ENCODE measurements at regions of chr12 and their contacts with region 1.

Region 1: GRCh38 chr12:93569656-93570551 is 2.6 kb upstream of the SOCS2 start:
- DNase-seq: peak; percentile 83
- ATAC-seq: peak; percentile 51
- H3K4me3 ChIP-seq: peak overlapping the region; percentile 63 to 89 (median 67)
- H3K4me3 Mint-ChIP-seq: peak overlapping the region; percentile 88
- H3K27ac ChIP-seq: no peak overlapping the region
- H3K27ac Mint-ChIP-seq: peak overlapping the region; percentile 47
- H3K4me1 ChIP-seq: peaks cover 26 to 33% of the 10 kb centered on the region in 2 donors
- H3K4me1 Mint-ChIP-seq: peaks cover 21% of the 10 kb centered on the region
- H3K27me3 ChIP-seq: peaks cover 0 to 43% (median 30%) of the 10 kb centered on the region in 4 experiments
- H3K27me3 Mint-ChIP-seq: peaks cover 44% of the 10 kb centered on the region
- CTCF ChIP-seq: peak; percentile 71

Region 2: DNA sequence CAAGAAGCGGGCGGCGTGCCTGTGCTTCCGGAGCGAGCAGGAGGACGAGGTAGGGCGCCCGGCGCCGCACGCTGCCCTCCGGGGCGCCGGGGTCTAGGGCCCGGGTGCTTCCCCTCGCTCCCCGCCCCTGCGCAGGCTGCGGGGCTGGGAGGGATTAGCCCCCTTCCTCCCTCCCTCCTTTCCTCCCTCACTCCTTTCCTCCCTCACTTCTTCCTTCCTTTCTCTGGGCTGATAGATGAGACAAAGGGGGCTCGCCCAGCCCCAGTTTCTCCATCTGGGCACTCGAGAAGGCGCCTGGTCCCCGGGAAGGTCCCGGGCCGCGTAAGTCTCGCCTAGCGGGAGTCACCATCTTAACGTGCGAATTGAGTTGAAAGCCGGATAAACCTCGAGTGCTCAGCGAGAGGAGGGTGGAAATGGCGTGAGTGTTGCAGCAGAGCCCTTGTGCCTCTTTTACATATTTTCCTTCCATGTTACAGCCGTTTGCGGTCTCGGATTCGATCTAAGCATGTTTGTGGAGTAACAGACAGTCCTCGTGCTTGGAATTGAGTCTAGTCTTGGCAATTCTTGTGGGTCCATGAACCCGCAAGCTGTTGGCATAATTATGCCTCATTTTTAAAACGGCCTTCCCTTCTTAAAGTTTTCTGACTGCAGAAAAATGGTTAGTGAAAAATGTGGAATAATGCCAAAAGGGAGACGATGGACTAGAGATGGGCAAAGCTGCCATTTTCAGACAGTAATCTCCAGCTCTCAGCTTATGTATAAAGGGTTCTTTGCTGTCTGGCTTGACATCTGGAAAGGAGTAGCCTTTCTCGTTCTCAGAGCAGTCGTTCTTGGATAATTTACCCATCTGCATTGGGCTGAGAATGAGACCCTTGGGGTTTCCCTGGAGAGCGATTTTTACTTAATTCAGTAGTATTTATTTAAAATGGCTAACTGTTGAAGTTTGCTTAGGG is 191.3 kb before region 1 on chr12:
- CTCF ChIA-PET with region 1: no interaction called
- POLR2A ChIA-PET with region 1: no interaction called
- intact Hi-C with region 1: loop called (anchors 5 kb)
- DNase-seq: peak; percentile 76
- ATAC-seq: peak; percentile 44
- H3K4me3 ChIP-seq: peak overlapping the region; percentile 73 to 96 (median 86)
- H3K4me3 Mint-ChIP-seq: peak overlapping the region; percentile 98
- H3K27ac ChIP-seq: peak overlapping the region; percentile 75 to 89
- H3K27ac Mint-ChIP-seq: peak overlapping the region; percentile 98
- H3K4me1 ChIP-seq: peaks cover 20 to 29% of the 10 kb centered on the region in 2 donors
- H3K4me1 Mint-ChIP-seq: peaks cover 40% of the 10 kb centered on the region
- H3K27me3 ChIP-seq: no peaks in the 10 kb centered on the region
- H3K27me3 Mint-ChIP-seq: no peaks in the 10 kb centered on the region
- CTCF ChIP-seq: no peak

Region 3: GRCh38 chr12:93502802-93503623 is 66.9 kb before region 1 on chr12:
- CTCF ChIA-PET with region 1: interaction called, 20 read pairs
- POLR2A ChIA-PET with region 1: no interaction called
- intact Hi-C with region 1: loop called (anchors 2 kb)
- DNase-seq: peak; percentile 67
- ATAC-seq: no peak
- H3K4me3 ChIP-seq: no peak overlapping the region
- H3K4me3 Mint-ChIP-seq: no peak overlapping the region
- H3K27ac ChIP-seq: no peak overlapping the region
- H3K27ac Mint-ChIP-seq: no peak overlapping the region
- H3K4me1 ChIP-seq: no peaks in the 10 kb centered on the region
- H3K4me1 Mint-ChIP-seq: peaks cover 5% of the 10 kb centered on the region
- H3K27me3 ChIP-seq: no peaks in the 10 kb centered on the region
- H3K27me3 Mint-ChIP-seq: no peaks in the 10 kb centered on the region
- CTCF ChIP-seq: peak; percentile 92

Region 4: DNA sequence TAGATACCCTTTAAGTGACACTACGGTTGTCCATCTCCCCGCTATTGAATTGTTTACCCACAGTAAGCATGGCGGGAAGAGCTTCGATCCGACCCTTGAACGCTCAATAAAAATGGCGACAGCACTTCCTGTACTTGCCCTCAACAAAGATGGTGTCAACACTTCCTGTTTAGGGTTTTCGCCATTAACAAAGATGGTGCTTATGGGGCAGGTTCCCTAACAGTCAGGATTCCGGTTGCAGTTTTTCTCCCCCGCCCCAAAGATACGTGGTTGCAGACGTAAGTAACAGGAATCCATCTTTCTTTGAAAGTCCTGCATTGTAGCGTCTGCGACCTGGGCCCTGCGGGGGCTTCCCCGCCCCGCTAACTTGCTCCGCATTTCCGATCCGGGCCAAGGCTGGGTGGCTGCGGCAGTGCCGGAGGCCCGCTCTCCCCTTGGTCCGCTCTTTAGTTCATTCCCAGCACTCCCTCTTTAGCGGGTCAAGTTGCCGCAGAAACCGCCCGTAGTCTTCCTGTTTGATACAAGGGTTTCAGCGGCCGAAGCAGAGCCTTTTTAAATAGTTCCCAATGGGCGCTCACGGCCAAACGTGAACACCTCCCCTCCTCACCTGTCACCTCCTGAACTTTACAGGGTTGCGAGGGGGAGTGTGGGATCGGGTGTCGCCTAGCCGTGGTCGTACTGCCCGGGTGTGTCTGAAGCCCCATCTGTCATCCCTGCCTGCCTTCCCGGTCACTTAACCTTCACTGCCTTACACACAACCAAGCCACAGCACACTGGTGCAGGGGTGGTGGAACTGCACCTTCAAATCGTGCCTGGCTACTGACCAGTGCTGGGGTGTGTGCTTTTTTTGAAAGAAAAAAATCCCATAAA is 107.5 kb after region 1 on chr12 and contains the start of gene CRADD:
- CTCF ChIA-PET with region 1: interaction called, 5 read pairs
- POLR2A ChIA-PET with region 1: no interaction called
- intact Hi-C with region 1: loop called (anchors 1 kb)
- DNase-seq: peak; percentile 98
- ATAC-seq: peak; percentile 91
- H3K4me3 ChIP-seq: peak within 1 kb of the TSS; percentile 50 to 90 (median 86)
- H3K4me3 Mint-ChIP-seq: peak within 1 kb of the TSS; percentile 95
- H3K27ac ChIP-seq: peak within 1 kb of the TSS; percentile 95 to 99
- H3K27ac Mint-ChIP-seq: peak within 1 kb of the TSS; percentile 99
- H3K4me1 ChIP-seq: peaks cover 14 to 18% of the 10 kb centered on the region in 2 donors
- H3K4me1 Mint-ChIP-seq: peaks cover 31% of the 10 kb centered on the region
- H3K27me3 ChIP-seq: peaks cover 0 to 5% (median 0%) of the 10 kb centered on the region in 4 experiments
- H3K27me3 Mint-ChIP-seq: peaks cover 15% of the 10 kb centered on the region
- CTCF ChIP-seq: no peak
- total RNA-seq, gene CRADD: 15.1 and 15.6 TPM in 2 replicates

Region 5: GRCh38 chr12:94459728-94460615 is 890.1 kb after region 1 on chr12 and contains the start of gene CEP83:
- CTCF ChIA-PET with region 1: no interaction called
- POLR2A ChIA-PET with region 1: no interaction called
- intact Hi-C with region 1: loop called (anchors 10 kb)
- DNase-seq: peak; percentile 97
- ATAC-seq: peak; percentile 96
- H3K4me3 ChIP-seq: peak within 1 kb of the TSS; percentile 77 to 95 (median 88)
- H3K4me3 Mint-ChIP-seq: peak within 1 kb of the TSS; percentile 97
- H3K27ac ChIP-seq: peak within 1 kb of the TSS; percentile 92 to 96
- H3K27ac Mint-ChIP-seq: peak within 1 kb of the TSS; percentile 94
- H3K4me1 ChIP-seq: peaks cover 11 to 19% of the 10 kb centered on the region in 2 donors
- H3K4me1 Mint-ChIP-seq: peaks cover 23% of the 10 kb centered on the region
- H3K27me3 ChIP-seq: no peaks in the 10 kb centered on the region
- H3K27me3 Mint-ChIP-seq: no peaks in the 10 kb centered on the region
- CTCF ChIP-seq: no peak
- total RNA-seq, gene CEP83: 24.8 and 27.2 TPM in 2 replicates

Measured in B cell (primary cell).